ENCODE measurements at regions of chr13 and their contacts with region 1.

Region 1: DNA sequence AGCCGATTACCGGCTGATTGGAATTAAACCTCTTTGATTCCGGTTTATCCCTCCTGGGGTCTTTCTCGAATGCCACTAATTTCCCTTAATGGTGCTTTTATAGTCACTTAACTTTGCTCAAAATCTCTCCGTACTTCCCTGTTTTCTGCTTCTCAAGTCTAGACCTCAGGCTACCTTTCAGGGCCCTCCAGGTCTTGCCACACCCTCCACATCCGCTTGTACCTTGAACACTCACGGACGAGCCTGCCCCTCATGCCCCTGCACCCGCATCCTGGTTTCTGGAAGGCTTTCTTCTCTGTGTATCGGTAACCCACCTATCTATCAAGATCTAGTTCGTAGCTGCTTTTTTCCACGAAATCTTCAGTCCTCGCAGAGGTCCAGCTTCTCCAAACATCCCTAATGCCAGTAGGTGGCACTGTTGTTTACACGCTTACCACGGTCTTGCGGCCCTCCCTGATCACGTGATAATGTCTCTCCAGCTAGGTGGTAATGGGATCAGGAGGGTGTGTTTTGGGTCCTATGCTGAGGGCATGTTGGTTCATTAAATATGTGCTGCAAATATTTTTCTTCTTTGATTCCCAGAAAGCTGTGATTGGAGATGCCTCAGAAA is 13.8 kb downstream of the ATP12A start:
- DNase-seq: no peak
- ATAC-seq: peak; percentile 51

Region 2: DNA sequence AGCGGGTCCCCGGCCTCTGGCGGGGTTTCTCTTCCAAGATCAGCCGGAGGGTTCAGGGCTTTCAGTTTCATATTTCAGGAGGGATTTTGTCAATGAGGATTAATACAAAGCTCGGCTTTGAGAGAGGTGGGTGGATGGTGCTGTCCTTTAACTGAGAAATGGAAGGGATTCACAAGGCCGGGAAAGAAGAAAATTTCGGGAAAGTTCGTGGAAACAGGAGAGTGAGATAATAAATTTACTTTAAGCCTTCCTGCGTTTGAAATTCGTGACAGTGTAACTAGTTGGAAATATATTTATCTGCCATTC is 181.1 kb before region 1 on chr13:
- intact Hi-C with region 1: no loop called
- DNase-seq: no peak
- ATAC-seq: no peak

Region 3: DNA sequence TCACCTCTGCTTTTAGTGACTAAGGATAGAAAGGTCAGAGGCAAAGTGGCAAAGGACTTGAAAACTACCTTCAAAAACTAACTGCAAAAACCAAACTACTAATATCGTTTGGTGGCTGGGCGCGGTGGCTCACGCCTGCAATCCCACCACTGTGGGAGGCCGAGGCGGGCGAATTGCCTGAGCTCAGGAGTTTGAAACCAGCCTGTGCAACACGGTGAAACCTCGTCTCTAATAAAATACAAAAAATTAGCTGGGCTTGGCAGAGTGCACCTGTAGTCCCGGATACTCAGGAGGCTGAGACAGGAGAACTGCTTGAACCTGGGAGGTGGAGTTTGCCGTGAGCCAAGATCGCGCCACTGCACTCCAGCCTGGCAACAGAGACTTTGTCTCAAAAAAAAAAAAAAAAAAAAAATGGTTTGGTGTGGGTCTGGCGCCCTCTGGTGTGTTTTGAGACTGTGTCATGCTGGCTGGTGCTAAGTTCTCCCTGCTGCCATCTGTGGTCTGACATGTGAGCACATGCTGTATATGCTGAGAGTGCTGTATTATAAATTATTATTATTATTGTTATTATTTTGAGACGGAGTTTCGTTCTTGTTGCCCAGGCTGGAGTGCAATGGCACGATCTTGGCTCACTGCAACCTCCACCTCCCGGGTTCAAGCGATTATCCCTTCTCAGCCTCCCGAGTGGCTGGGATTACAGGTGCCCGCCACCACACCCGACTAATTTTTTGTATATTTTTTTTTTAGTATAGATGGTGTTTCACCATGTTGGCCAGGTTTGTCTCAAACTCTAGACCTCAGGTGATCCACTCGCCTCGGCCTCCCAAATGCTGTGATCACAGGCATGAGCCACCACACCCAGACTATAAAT is 34.0 kb after region 1 on chr13:
- intact Hi-C with region 1: loop called (anchors 1 kb)
- DNase-seq: no peak
- ATAC-seq: peak; percentile 86

Region 4: DNA sequence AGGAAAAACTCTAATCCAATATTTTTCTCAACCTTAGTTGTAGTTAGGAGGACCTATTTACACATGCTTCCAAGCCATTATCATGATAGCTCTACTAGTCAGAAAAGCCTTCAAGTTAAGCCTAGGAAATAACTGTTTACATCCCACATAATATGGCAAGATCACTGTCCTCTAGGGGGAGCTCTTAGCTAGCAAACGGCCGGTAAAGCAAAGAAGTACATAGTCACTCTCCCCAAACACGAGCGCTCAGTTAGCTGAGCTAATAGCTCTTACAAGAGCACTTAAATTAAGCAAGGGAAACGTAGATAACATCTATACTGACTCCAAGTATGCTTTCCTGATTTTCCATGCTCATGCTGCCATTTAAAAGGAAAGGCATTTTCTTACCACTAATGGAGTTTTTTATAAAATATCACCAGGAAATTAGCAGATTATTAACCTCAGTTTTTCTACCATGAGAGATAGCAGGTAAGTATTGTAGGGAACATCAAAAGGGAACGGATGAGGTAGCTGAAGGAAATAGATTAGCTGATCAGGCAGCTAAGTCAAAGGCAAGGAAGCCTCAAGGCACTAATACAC is 301.3 kb after region 1 on chr13:
- intact Hi-C with region 1: loop called (anchors 10 kb)
- DNase-seq: no peak
- ATAC-seq: peak; percentile 80

Measured in Right ventricle myocardium inferior (tissue), 1 donor.